Naive thymus-derived CD4-positive, alpha-beta T cell (primary cell): ENCODE measurements at regions of chr4 and their contacts with region 1.

Region 1: GRCh38 chr4:21765810-21766407 is 182.7 kb downstream of the KCNIP4 start:
- DNase-seq: peak in 2 of 9 donors; percentile 11 to 12
- ATAC-seq: peak; percentile 59
- H3K4me3 ChIP-seq: no peak overlapping the region
- H3K4me3 Mint-ChIP-seq: no peak overlapping the region
- H3K27ac ChIP-seq: no peak overlapping the region
- H3K27ac Mint-ChIP-seq: peak overlapping the region in 1 of 9 donors; percentile 68
- H3K4me1 ChIP-seq: no peaks in the 10 kb centered on the region
- H3K4me1 Mint-ChIP-seq: peaks cover 0 to 3% (median 0%) of the 10 kb centered on the region in 7 donors
- H3K27me3 ChIP-seq: no peaks in the 10 kb centered on the region
- H3K27me3 Mint-ChIP-seq: peaks cover 0 to 17% (median 7%) of the 10 kb centered on the region in 5 donors

Region 2: DNA sequence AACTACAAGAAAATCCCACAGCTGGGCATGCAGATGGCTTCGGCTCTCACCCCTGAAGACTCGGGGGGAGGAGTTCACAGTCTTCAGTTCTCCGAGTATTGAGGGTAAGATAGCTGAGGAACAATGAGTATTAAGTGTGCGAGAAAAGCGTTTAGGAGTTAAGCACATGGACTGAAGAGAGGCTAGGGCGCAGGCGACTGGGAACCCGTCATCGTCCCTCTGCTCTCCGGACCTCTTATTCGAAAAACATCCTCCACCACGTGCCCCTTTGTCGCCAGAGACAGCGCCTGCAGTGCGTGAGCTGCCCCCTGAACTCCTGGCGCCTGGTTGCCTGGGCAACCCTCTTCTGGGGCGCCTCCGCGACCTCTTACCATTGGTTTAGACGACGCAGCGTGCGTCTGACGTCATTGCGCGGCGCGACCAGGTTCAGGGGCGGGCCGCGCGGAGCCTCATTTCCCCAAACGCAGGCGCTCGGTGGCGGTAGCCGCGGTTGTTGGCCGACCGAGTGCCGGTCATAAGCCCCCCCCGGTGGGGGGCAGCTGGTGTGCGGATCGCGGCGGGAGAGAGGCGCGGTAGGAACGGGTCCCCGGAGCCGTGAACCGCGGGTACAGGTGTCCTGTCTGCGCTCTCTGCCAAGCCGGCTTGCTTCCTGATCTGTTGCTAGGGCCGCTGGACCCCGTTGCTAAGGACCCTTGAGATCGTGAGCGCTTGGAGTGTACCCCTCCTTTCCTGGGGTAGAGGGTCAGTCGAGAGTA is 1065.7 kb before region 1 on chr4 and contains the start of gene PACRGL:
- CTCF ChIA-PET with region 1: no interaction called
- POLR2A ChIA-PET with region 1: no interaction called
- intact Hi-C with region 1: loop called in 1 of 2 experiments (anchors 10 kb)
- DNase-seq: peak; percentile 82 to 94 (median 92)
- ATAC-seq: peak; percentile 99
- H3K4me3 ChIP-seq: peak within 1 kb of the TSS; percentile 73
- H3K4me3 Mint-ChIP-seq: peak within 1 kb of the TSS; percentile 91 to 98 (median 96)
- H3K27ac ChIP-seq: peak within 1 kb of the TSS; percentile 72
- H3K27ac Mint-ChIP-seq: peak within 1 kb of the TSS; percentile 91 to 97 (median 95)
- H3K4me1 ChIP-seq: peaks cover 10 to 13% of the 10 kb centered on the region in 2 donors
- H3K4me1 Mint-ChIP-seq: peaks cover 20 to 55% (median 44%) of the 10 kb centered on the region in 7 donors
- H3K27me3 ChIP-seq: peaks cover 0 to 4% of the 10 kb centered on the region in 2 donors
- H3K27me3 Mint-ChIP-seq: peaks cover 0 to 5% (median 4%) of the 10 kb centered on the region in 5 donors
- total RNA-seq, gene PACRGL: 10.7 to 15.7 (median 11.7) TPM